Prostate gland (tissue), 2 donors: ENCODE measurements at regions of chr19 and their contacts with region 1.

Region 1: DNA sequence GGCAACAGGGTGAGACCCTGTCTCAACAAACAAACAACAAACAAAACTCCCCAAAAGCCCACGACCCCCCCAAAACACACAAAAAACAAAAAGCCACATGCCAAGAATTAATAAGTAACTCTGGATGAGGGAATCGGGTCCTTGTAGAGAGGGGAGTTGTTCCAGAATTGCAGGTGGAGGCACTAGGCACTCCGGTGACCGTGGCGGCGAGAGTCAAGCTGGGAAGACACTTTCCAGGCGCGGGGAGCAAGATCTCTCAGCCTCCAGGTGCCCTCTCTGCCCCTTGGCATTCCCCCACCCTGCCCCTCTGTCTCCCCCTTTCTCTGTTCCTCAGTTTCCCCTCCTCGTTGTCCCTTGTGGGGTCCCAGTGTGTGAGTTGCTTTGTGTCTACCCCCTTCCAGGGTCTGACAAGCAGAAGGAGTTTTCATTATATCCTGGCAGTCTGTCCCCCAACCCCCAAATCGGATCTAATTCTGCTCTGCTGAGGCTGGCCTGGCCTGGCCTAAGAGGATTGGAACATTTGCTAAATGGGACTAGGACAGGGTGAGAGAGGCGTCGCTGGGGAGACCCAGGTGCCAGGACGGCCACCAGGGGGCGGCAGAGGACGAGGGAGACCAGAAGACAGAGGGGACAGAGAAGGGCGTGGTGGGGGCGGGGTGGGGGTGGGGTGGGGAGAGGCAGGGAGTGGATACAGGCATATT is 8.3 kb upstream of the CRX start:
- DNase-seq: peak; percentile 16
- H3K4me3 ChIP-seq: no peak overlapping the region
- H3K27ac ChIP-seq: no peak overlapping the region
- H3K4me1 ChIP-seq: no peaks in the 10 kb centered on the region
- H3K27me3 ChIP-seq: no peaks in the 10 kb centered on the region
- CTCF ChIP-seq: peak in 3 of 4 experiments; percentile 14 to 54 (median 22)
- POLR2A ChIP-seq: no peak

Region 2: GRCh38 chr19:47633519-47633918 is 179.9 kb before region 1 on chr19:
- intact Hi-C with region 1: no loop called
- DNase-seq: no peak
- H3K4me3 ChIP-seq: no peak overlapping the region
- H3K27ac ChIP-seq: peak overlapping the region; percentile 19 to 58
- H3K4me1 ChIP-seq: no peaks in the 10 kb centered on the region
- H3K27me3 ChIP-seq: no peaks in the 10 kb centered on the region
- CTCF ChIP-seq: no peak
- POLR2A ChIP-seq: no peak

Region 3: DNA sequence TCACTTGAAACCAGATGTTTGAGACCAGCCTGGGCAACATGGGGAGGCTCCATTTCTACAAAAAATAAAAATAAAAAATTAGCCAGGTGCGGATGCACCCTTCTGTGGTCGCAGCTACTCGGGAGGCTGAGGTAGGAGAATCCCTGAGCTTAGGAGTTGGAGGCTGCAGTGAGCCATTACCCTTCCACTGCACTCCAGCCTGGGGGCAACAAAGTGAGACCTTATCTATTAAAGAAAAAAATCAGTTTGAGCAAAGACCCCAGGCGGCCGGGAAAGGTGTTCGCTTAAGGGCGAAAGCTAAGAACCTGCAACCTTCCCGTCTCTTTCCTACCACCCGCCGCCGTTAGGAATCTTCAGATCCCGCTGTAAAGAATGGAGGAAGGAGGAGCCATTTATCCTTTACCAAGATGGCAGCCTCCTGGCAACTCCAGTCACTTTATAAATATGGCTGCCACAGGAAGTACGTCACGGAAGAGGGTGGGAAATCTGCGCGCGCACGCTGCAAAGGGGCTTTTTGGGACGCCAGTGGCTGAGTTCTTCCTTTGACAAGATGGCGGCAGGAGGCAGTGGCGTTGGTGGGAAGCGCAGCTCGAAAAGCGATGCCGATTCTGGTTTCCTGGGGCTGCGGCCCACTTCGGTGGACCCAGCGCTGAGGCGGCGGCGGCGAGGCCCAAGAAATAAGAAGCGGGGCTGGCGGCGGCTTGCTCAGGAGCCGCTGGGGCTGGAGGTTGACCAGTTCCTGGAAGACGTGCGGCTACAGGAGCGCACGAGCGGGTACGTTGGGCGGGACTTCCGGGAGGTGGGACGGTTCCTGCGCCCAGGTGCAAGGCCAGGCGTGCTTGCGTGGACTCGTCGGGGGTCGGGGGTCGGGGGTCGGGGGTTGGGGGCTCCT is 68.2 kb before region 1 on chr19 and contains the start of gene NOP53:
- intact Hi-C with region 1: no loop called
- DNase-seq: peak; percentile 96
- H3K4me3 ChIP-seq: peak within 1 kb of the TSS; percentile 59 to 74
- H3K27ac ChIP-seq: peak within 1 kb of the TSS; percentile 93 to 94
- H3K4me1 ChIP-seq: no peaks in the 10 kb centered on the region
- H3K27me3 ChIP-seq: no peaks in the 10 kb centered on the region
- CTCF ChIP-seq: peak in 3 of 4 experiments; percentile 21 to 48 (median 36)
- POLR2A ChIP-seq: peak; percentile 78
- total RNA-seq, gene NOP53: 465 to 586 TPM

Region 4: GRCh38 chr19:47765523-47766358 is 47.7 kb before region 1 on chr19:
- intact Hi-C with region 1: no loop called
- DNase-seq: peak; percentile 44
- H3K4me3 ChIP-seq: no peak overlapping the region
- H3K27ac ChIP-seq: no peak overlapping the region
- H3K4me1 ChIP-seq: no peaks in the 10 kb centered on the region
- H3K27me3 ChIP-seq: no peaks in the 10 kb centered on the region
- CTCF ChIP-seq: peak; percentile 21 to 74 (median 71)
- POLR2A ChIP-seq: no peak

Region 5: DNA sequence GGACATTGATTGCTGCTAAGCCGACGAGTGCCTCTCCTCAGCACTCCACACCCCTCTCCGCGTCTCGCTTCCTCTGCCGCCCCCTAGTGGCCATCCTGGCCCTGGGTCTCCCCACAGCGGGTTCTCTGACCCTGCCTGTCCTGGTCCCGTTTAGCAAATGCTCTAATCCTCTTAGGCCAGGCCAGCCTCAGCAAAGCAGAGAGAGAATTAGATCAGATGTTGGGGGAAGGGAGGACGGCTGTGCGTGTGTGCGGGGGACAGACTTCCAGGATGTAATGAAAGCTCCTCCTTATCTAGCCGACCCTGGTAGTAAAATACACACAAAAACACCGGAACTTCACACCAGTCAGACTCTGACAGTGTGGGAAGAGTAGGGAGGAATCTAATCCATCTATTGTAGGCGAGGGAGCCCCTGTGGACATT is 50.1 kb after region 1 on chr19:
- intact Hi-C with region 1: loop called (anchors 10 kb)
- DNase-seq: peak; percentile 54
- H3K4me3 ChIP-seq: no peak overlapping the region
- H3K27ac ChIP-seq: no peak overlapping the region
- H3K4me1 ChIP-seq: no peaks in the 10 kb centered on the region
- H3K27me3 ChIP-seq: no peaks in the 10 kb centered on the region
- CTCF ChIP-seq: peak; percentile 64 to 76 (median 73)
- POLR2A ChIP-seq: no peak